Heart left ventricle (tissue), 16 donors: ENCODE measurements at regions of chr1 and their contacts with region 1.

Region 1: DNA sequence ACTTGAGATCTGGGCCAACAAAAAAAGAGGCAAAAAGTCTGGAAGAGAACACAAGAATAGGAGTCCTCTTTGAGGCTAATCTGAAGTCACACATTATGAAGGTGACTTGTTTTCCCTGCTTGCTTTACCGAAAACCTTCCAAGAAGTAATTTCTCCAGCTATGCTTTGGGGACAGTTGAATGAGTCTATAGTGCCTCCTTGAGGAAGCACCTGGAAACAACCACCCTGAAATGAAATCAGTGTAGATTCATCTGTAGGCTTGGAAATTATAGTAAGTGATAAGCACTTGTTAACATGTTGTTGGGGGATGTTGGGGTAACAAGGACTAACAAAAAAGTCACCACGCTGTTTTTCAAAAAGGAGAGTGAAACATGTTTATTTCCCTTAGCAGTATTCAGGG is 23.4 kb upstream of the RPTN start:
- DNase-seq: no peak
- ATAC-seq: no peak
- H3K4me3 ChIP-seq: no peak overlapping the region
- H3K27ac ChIP-seq: no peak overlapping the region
- H3K4me1 ChIP-seq: no peaks in the 10 kb centered on the region
- H3K27me3 ChIP-seq: peaks cover 0 to 8% (median 0%) of the 10 kb centered on the region in 9 donors
- CTCF ChIP-seq: peak in 10 of 12 donors; percentile 15 to 47 (median 38)
- POLR2A ChIP-seq: no peak

Region 2: DNA sequence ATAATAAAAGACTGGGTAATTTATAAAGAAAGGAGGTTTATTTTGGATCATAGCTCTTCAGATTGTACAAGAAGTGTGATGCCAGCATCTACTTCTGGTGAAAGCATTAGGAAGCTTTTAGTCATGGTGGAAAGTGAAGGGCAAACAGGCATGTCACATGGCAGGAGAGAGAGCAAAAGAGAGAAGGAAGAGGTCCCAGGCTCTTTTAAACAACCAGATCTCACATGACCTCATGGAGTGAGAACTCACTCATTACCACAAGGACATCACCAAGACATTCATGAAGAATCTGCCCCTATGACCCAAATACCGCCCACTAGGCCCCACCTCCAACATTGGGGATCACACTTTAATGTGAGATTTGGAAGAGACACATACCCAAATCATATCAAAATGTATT is 33.5 kb before region 1 on chr1:
- intact Hi-C with region 1: loop called in 2 of 10 experiments (anchors 5 kb)
- DNase-seq: no peak
- ATAC-seq: no peak
- H3K4me3 ChIP-seq: no peak overlapping the region
- H3K27ac ChIP-seq: no peak overlapping the region
- H3K4me1 ChIP-seq: no peaks in the 10 kb centered on the region
- H3K27me3 ChIP-seq: no peaks in the 10 kb centered on the region
- CTCF ChIP-seq: no peak
- POLR2A ChIP-seq: no peak

Region 3: DNA sequence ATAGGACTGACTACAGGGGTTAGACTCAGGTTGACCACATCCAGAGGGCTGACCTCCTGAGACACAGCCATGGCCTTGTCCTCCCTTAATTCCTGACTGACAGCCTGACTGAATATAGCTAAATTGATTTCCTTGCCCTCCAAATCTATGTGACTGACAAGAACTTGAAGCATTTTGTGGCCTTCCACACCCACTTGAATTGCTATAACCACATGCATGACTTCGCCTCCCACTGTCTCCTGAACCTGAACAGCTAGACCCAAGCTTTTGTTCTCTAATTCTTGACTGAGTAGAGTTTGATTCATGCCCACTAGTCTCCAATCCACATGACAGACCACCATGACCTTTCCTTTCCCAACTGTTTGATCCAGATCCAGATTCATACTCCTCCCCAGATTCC is 174.3 kb after region 1 on chr1:
- intact Hi-C with region 1: no loop called
- DNase-seq: no peak
- ATAC-seq: no peak
- H3K4me3 ChIP-seq: no peak overlapping the region
- H3K27ac ChIP-seq: no peak overlapping the region
- H3K4me1 ChIP-seq: no peaks in the 10 kb centered on the region
- H3K27me3 ChIP-seq: no peaks in the 10 kb centered on the region
- CTCF ChIP-seq: no peak
- POLR2A ChIP-seq: no peak